Transverse colon (tissue), 4 donors: ENCODE measurements at regions of chr7 and their contacts with region 1.

Region 1: GRCh38 chr7:115276791-115277190 is 354.9 kb downstream of the MDFIC start:
- DNase-seq: no peak
- H3K4me3 ChIP-seq: no peak overlapping the region
- H3K27ac ChIP-seq: no peak overlapping the region
- H3K4me1 ChIP-seq: peaks cover 0 to under 1% (median 0%) of the 10 kb centered on the region in 4 donors
- H3K27me3 ChIP-seq: no peaks in the 10 kb centered on the region
- CTCF ChIP-seq: no peak
- EP300 ChIP-seq: no peak
- POLR2A ChIP-seq: no peak

Region 2: DNA sequence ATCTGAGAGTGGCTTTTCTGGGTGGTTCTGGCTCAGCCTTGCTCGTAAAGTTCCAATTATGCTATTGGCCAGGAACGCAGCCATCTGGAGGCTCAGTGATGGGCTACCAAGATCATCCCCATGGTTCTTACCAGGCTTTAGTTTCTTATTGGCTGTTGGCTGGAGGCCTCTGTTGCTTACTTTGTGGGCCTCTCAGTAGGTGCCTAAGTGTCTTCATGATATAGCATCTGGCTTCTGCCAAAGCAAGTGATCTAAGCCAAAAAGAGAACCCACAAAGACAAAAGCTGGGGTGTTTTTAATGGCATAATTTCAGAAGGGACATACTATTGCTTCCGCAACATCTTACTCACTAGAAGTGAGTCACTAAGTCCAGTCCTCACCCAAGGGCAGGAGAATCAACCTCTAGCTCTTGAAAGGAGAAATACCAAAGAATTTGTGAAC is 486.9 kb before region 1 on chr7:
- in situ Hi-C with region 1: no loop called
- intact Hi-C with region 1: loop called (anchors 5 kb)
- DNase-seq: no peak
- H3K4me3 ChIP-seq: no peak overlapping the region
- H3K27ac ChIP-seq: no peak overlapping the region
- H3K4me1 ChIP-seq: no peaks in the 10 kb centered on the region
- H3K27me3 ChIP-seq: no peaks in the 10 kb centered on the region
- CTCF ChIP-seq: no peak
- EP300 ChIP-seq: no peak
- POLR2A ChIP-seq: no peak

Region 3: DNA sequence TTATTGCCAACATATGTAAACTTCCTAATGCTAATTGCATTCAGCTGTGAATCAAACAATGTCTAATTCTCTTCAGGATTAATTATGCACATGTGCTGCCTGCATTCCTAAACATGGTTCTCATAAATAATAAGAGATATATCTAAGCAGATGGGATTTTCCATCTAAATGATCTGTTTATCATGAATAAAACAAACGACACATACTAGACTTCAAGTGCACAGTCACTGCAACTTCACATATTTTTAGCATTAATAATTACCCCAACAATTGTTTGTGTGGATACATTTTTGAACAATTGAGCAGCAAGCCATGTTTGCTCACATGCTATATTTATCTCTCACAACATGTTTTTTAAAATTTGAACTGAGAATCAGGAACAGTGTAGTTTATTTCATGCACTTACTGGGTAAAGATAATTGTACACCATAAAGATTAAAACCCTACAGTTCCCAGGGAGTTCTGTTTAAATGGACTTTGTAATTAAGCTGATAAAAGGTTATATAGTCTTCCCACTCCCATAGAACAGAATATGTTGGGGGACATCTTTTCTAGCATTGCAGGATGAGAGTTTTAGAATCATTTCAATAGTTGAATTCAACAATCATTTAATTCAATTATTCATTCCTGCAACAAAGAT is 23.6 kb after region 1 on chr7:
- in situ Hi-C with region 1: no loop called
- intact Hi-C with region 1: no loop called
- DNase-seq: no peak
- H3K4me3 ChIP-seq: no peak overlapping the region
- H3K27ac ChIP-seq: no peak overlapping the region
- H3K4me1 ChIP-seq: peaks cover 0 to 13% (median 6%) of the 10 kb centered on the region in 4 donors
- H3K27me3 ChIP-seq: no peaks in the 10 kb centered on the region
- CTCF ChIP-seq: no peak
- EP300 ChIP-seq: no peak
- POLR2A ChIP-seq: no peak

Region 4: DNA sequence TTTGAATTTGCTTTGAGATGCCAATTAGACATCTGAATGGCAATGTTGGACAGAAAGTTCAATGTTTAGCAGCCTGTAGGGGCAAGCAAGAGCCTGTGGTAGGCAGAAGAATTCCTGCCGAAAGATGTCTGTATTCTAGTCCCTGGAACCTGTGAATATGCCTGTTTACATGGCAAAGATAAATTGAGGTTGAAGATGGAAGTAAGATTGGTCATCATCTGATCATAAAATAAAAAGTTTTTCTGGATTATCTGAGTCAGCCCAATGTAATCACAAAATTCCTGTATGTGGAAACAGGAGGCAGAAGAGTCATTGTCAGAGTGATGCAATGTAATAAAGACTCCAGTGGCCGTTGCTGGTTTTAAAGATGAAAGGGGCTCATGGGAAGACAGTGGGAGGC is 75.6 kb after region 1 on chr7:
- in situ Hi-C with region 1: no loop called
- intact Hi-C with region 1: no loop called
- DNase-seq: no peak
- H3K4me3 ChIP-seq: no peak overlapping the region
- H3K27ac ChIP-seq: no peak overlapping the region
- H3K4me1 ChIP-seq: peaks cover 0 to 5% (median 0%) of the 10 kb centered on the region in 4 donors
- H3K27me3 ChIP-seq: no peaks in the 10 kb centered on the region
- CTCF ChIP-seq: no peak
- EP300 ChIP-seq: no peak
- POLR2A ChIP-seq: no peak